ENCODE measurements at regions of chr1 and their contacts with region 1.

Region 1: GRCh38 chr1:42766741-42767509 is at the starts of genes C1orf50 and P3H1:
- DNase-seq: peak; percentile 100
- H3K4me3 ChIP-seq: peak within 1 kb of the TSS; percentile 83
- H3K27ac ChIP-seq: peak within 1 kb of the TSS; percentile 89
- H3K4me1 ChIP-seq: peaks cover 17% of the 10 kb centered on the region
- H3K27me3 ChIP-seq: no peaks in the 10 kb centered on the region
- CTCF ChIP-seq: no peak
- total RNA-seq, gene C1orf50: 13.1 and 14.7 TPM in 2 replicates
- total RNA-seq, gene P3H1: 57.8 and 64.9 TPM in 2 replicates

Region 2: GRCh38 chr1:42703888-42704464 is 62.9 kb before region 1 on chr1:
- CTCF ChIA-PET with region 1: interaction called, 13 read pairs
- POLR2A ChIA-PET with region 1: no interaction called
- intact Hi-C with region 1: no loop called
- DNase-seq: no peak
- H3K4me3 ChIP-seq: no peak overlapping the region
- H3K27ac ChIP-seq: no peak overlapping the region
- H3K4me1 ChIP-seq: no peaks in the 10 kb centered on the region
- H3K27me3 ChIP-seq: no peaks in the 10 kb centered on the region
- CTCF ChIP-seq: no peak

Region 3: DNA sequence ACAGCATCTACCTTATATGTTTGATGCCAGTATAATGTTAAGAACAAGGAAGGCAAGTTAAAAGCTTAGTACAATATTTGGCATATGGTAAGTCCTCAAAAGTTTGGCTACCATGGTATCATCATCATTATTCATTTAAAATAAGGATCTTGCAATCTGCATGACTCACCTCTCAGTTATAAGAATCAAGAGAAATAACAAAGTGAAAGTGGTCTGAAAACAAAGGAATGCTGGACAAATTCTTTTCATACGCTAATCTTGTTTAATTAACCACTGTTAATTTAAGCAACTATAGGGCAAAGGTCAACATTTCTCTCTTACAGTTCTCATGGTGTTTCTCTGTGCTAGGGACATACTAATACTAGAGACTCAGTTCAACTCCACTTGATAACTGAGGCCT is 13.9 kb before region 1 on chr1:
- CTCF ChIA-PET with region 1: interaction called, 6 read pairs
- POLR2A ChIA-PET with region 1: interaction called, 10 read pairs
- intact Hi-C with region 1: no loop called
- DNase-seq: no peak
- H3K4me3 ChIP-seq: no peak overlapping the region
- H3K27ac ChIP-seq: no peak overlapping the region
- H3K4me1 ChIP-seq: peaks cover 3% of the 10 kb centered on the region
- H3K27me3 ChIP-seq: no peaks in the 10 kb centered on the region
- CTCF ChIP-seq: no peak

Measured in A673 (cell line).